ENCODE measurements at regions of chr1 and their contacts with region 1.

Region 1: GRCh38 chr1:25848531-25848930 is 10.7 kb downstream of the AUNIP start:
- DNase-seq: no peak
- ATAC-seq: peak; percentile 31
- H3K4me3 ChIP-seq: no peak overlapping the region
- H3K27ac ChIP-seq: no peak overlapping the region
- H3K4me1 ChIP-seq: peaks cover 0 to 18% of the 10 kb centered on the region in 2 experiments; a peak in 4 of 5 replicates
- H3K27me3 ChIP-seq: no peaks in the 10 kb centered on the region
- CTCF ChIP-seq: no peak
- EP300 ChIP-seq: no peak
- POLR2A ChIP-seq: no peak
- RAD21 ChIP-seq: no peak

Region 2: DNA sequence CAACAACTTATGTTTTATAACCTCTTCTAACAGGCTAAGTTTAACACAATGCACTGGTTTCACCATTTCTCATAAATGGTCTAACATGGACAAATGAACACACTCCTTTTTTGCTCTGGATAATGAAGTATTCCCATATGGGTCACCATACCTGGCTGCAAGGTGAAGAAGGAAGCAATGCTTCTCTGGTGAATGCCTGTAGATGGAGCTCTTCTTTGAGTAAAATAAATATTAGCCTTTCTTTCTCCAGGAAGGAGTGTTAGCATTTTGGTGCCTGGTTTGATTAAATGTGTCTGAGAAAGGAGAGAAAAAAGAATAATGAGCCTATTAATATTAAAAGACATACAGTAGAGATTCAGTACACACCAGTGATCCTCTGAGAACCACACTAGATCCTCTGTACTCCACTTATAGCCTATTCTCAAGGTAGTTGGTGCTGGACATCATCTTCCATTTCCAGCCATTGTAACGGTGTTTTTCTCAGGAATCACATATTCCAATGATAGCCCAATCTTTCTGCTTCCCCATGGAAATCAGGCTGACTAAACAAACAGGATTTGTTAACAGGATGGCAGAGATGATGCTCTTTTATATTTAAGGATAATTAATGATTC is 11.2 kb before region 1 on chr1:
- CTCF ChIA-PET with region 1: no interaction called
- POLR2A ChIA-PET with region 1: interaction called, 108 read pairs
- in situ Hi-C with region 1: no loop called
- intact Hi-C with region 1: no loop called
- DNase-seq: no peak
- ATAC-seq: peak; percentile 67
- H3K4me3 ChIP-seq: no peak overlapping the region
- H3K27ac ChIP-seq: no peak overlapping the region
- H3K4me1 ChIP-seq: peaks cover 9 to 10% of the 10 kb centered on the region in 2 experiments; a peak in 4 of 5 replicates
- H3K27me3 ChIP-seq: no peaks in the 10 kb centered on the region
- CTCF ChIP-seq: peak; percentile 31 to 62 (median 51); a peak in 4 of 6 replicates
- EP300 ChIP-seq: no peak
- POLR2A ChIP-seq: no peak
- RAD21 ChIP-seq: peak; percentile 31 to 66; a peak in 3 of 4 replicates

Region 3: DNA sequence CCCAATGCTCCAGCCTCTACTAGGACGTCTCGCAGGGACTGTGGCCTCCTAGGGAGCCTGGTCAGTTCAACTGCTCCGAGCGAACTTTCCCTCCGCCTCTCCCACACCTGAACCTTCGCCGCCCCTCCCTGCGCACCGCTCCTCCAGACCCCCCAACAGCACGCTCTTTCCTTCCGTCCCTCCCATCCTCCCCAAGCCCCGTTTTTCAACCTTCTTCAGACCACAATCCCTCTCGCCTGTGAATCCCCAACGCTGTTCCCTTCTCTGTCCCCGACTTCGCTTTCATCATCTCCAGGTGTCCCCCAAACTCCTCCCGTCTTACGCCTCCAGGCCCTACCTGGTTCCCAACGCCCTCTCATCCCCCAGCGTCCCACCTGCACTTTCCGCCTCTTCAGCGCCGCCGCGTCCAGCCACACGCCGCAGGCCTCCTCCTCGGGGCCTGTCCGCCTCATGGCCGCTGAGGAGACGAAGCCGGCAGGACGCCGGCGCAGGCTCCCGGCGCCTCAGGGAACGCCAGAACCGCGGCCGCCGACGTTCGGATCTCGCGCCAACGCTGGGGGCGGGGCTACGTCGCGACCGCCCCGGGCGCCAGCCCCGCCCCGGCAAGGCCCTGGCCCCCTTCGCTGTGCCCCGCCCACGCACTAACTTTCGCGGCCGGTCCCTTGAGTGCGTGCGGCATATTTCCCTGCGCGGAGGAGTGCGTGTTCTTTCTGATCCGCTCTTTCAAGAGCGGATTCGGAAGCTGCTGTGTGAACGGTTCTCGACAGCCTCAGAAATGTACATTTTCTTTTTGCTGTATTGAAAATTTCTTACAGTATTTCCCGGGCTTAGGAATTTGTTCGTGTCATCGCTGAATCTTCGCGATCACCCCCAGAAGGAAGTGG is 10.6 kb after region 1 on chr1 and contains the start of gene AUNIP:
- CTCF ChIA-PET with region 1: no interaction called
- POLR2A ChIA-PET with region 1: interaction called, 49 read pairs
- in situ Hi-C with region 1: no loop called
- intact Hi-C with region 1: no loop called
- DNase-seq: peak; percentile 97 to 100 (median 98)
- ATAC-seq: peak; percentile 88
- H3K4me3 ChIP-seq: peak within 1 kb of the TSS; percentile 87
- H3K27ac ChIP-seq: peak within 1 kb of the TSS; percentile 92
- H3K4me1 ChIP-seq: peaks cover 49 to 60% of the 10 kb centered on the region in 2 experiments
- H3K27me3 ChIP-seq: no peaks in the 10 kb centered on the region
- CTCF ChIP-seq: 0 out of 6 replicates have a peak, but pooled peaks of 2 of the 3 experiments have one; percentile 12 to 15
- EP300 ChIP-seq: 0 out of 2 replicates have a peak, but pooled peaks have one; percentile 2
- POLR2A ChIP-seq: peak; percentile 97
- RAD21 ChIP-seq: peak in 1 of 2 experiments; percentile 23; a peak in 1 of 4 replicates
- polyA plus RNA-seq, gene AUNIP: 12.1 to 15.2 TPM